ENCODE measurements at regions of chr17 and their contacts with region 1.

Region 1: DNA sequence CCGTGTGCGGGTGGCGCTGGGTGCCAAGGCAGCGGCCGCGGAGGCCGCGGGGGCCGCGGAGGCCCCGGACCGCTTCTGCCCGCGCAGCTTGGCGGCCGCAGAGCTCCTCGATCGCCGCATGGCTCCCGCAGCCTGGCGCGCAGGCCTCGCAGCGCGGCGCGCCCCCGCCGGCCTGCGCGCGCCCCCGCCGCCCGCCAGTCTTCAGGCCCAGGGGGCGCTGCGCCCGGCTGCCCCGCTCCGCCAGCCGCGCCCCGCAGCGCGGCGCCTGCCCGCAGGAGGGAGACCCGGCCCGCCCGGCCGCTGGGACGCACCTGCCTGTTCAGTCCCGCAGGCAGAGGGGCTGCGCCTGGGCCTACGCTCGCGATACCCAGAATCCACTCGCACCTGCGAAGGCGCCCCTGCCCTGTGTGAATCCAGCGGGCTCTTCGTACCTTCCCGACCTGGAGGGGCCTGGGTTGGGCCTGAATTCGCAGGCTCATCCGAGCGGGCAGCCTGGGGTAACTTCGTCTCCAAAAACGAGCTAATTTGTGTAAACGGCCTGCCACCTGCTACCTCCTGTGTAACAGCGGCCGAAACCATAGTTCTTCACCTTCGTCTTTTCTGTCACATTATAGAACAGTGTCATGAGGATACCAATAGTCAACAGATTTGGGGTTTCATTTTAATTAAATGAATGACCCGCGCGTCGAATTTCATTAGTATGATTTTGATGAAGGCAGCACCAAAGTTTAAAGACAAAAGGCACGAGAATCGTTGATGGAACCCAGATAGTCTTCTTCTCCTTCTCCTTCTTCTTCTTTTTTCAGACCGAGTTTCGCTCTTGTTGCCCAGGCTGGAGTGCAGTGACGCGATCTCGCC is at the start of gene CENPV:
- DNase-seq: peak; percentile 85
- H3K4me3 ChIP-seq: peak within 1 kb of the TSS; percentile 72
- H3K27ac ChIP-seq: peak within 1 kb of the TSS; percentile 59
- H3K4me1 ChIP-seq: peaks cover 35% of the 10 kb centered on the region
- CTCF ChIP-seq: 0 out of 2 replicates have a peak, but pooled peaks have one; percentile 28
- total RNA-seq, gene CENPV: 71.9 and 77.3 TPM in 2 replicates

Region 2: DNA sequence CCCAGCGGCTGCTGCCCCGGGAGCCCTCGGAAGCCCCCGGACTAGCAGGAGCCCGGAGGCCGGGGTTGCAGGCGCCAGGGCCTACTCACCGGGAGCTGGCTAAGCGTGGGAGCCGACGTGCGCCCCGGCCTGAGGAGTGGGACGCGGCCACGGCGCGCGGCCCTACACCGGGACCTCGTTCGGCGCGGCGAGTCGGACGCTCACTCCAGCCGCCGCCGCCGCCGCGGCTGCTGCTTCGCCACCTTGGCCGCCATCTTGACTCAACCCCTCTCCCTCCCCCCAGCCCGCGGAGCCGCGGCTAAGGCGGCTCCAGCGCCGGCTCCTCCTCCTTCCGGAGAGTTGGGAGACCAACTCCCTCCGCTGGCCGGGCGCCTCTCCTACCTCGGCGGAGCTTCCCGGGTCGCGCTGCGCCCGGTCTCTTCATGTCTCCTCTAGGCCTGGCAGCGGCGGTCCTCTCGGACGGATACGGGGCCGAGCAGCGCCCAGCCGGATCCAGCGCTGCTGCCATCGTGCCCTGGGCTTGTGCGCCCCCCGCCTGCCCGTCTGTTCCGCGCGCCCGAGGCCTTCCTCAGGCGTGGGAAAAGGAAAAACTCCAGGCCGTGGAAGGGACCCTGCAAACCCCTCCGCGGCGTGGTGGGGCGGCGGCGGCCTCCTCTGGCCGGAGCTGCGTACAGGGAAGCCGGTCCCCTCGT is 138.1 kb before region 1 on chr17 and contains the start of gene NCOR1:
- CTCF ChIA-PET with region 1: no interaction called
- POLR2A ChIA-PET with region 1: no interaction called
- intact Hi-C with region 1: loop called (anchors 5 kb)
- DNase-seq: peak; percentile 93
- H3K4me3 ChIP-seq: peak within 1 kb of the TSS; percentile 75
- H3K27ac ChIP-seq: peak within 1 kb of the TSS; percentile 87
- H3K4me1 ChIP-seq: peaks cover 20% of the 10 kb centered on the region
- CTCF ChIP-seq: peak; percentile 50
- total RNA-seq, gene NCOR1: 68.0 and 80.6 TPM in 2 replicates

Region 3: DNA sequence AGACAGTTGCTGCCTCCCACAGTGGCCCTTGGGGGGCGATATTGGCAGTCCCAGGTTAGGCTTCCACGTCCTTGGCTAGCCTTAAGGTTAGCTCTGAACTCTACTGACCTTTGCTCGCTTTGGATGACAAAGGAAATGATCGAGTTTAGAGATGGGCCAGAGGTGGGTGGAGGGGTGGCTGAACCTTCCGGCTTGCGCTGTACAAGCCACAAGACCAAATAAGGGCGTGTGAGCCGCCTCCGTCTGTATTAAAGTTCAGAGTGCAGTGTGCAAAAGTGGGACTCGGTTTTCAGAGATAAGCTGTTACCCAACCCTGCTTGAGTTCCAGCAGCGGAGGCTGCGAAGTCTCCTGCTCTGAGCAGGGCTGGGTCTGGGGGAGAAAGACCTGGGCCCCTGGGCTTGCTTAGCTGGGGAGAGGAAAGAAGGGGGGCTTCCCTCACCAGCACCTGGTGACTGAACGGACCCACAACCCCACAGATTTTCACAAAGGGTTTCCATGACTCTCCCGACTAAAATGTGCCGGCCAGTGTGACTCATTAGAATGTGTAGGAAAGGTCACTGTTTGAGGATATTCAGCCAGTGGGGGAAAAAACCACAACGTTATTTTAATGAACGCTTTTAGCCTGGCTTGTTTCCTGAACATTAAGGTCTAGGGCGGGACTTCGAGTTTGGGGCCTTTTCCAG is 67.4 kb before region 1 on chr17:
- CTCF ChIA-PET with region 1: no interaction called
- POLR2A ChIA-PET with region 1: interaction called, 4 read pairs
- intact Hi-C with region 1: loop called (anchors 2 kb)
- DNase-seq: peak; percentile 67
- H3K4me3 ChIP-seq: peak overlapping the region; percentile 51
- H3K27ac ChIP-seq: peak overlapping the region; percentile 82
- H3K4me1 ChIP-seq: peaks cover 55% of the 10 kb centered on the region
- CTCF ChIP-seq: peak; percentile 86

Region 4: GRCh38 chr17:16639438-16639837 is 285.9 kb after region 1 on chr17:
- CTCF ChIA-PET with region 1: no interaction called
- POLR2A ChIA-PET with region 1: no interaction called
- intact Hi-C with region 1: no loop called
- DNase-seq: no peak
- H3K4me3 ChIP-seq: no peak overlapping the region
- H3K27ac ChIP-seq: no peak overlapping the region
- H3K4me1 ChIP-seq: no peaks in the 10 kb centered on the region
- CTCF ChIP-seq: no peak